ENCODE measurements at regions of chr5 and their contacts with region 1.

Region 1: DNA sequence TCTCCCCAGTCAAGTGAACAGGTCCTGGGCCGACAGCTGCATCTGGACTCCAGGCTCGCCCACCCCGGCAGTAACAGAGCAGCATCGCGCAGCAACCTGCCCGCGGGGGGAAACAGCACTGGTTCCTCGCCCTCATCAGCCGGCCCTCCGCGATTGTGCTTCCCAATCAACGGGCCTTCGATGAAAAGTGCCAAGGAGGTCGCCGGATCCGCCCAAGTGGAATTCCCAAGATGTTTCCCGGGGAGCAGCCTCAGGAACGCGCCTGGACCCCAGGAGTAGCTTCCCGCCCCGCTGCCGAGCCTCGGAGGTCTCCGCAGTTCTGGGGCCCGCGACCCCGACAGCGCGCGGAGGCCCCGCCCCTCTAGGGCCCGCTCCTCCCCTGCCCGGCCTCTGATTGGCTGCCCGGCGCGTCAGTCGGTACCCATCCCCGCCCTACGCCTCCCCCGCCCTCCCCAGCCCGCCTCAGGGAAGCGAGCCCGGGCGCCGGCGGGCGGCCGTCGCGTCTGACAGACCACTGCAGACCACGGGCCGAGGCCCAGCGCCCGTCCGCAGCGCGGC is at the start of gene OTULINL:
- DNase-seq: peak; percentile 81 to 94 (median 88)
- ATAC-seq: peak; percentile 84 to 86
- H3K4me3 Mint-ChIP-seq: peak within 1 kb of the TSS; percentile 86 to 95 (median 89)
- H3K27ac Mint-ChIP-seq: peak within 1 kb of the TSS; percentile 83 to 97 (median 94)
- H3K4me1 Mint-ChIP-seq: peaks cover 20 to 46% (median 42%) of the 10 kb centered on the region in 4 donors
- H3K27me3 Mint-ChIP-seq: peaks cover 0 to 10% (median 0%) of the 10 kb centered on the region in 5 donors
- polyA plus RNA-seq, gene OTULINL: 32.9 to 38.3 (median 36.2) TPM

Region 2: GRCh38 chr5:14415024-14415697 is 166.3 kb before region 1 on chr5:
- POLR2A ChIA-PET with region 1: interaction called, 16 read pairs
- DNase-seq: peak in 3 of 10 donors; percentile 15 to 33 (median 19)
- ATAC-seq: peak in 1 of 2 donors; percentile 15
- H3K4me3 Mint-ChIP-seq: peak overlapping the region; percentile 4 to 86 (median 70)
- H3K27ac Mint-ChIP-seq: peak overlapping the region; percentile 87 to 98 (median 94)
- H3K4me1 Mint-ChIP-seq: peaks cover 21 to 46% (median 39%) of the 10 kb centered on the region in 4 donors
- H3K27me3 Mint-ChIP-seq: no peaks in the 10 kb centered on the region

Region 3: GRCh38 chr5:14560091-14560595 is 21.3 kb before region 1 on chr5:
- POLR2A ChIA-PET with region 1: interaction called, 10 read pairs
- DNase-seq: peak in 5 of 10 donors; percentile 22 to 60 (median 55)
- ATAC-seq: peak; percentile 81 to 86
- H3K4me3 Mint-ChIP-seq: peak overlapping the region; percentile 68 to 89 (median 80)
- H3K27ac Mint-ChIP-seq: peak overlapping the region in 9 of 10 donors; percentile 70 to 92 (median 86)
- H3K4me1 Mint-ChIP-seq: peaks cover 20 to 45% (median 44%) of the 10 kb centered on the region in 4 donors
- H3K27me3 Mint-ChIP-seq: peaks cover 0 to 2% (median 0%) of the 10 kb centered on the region in 5 donors

Region 4: DNA sequence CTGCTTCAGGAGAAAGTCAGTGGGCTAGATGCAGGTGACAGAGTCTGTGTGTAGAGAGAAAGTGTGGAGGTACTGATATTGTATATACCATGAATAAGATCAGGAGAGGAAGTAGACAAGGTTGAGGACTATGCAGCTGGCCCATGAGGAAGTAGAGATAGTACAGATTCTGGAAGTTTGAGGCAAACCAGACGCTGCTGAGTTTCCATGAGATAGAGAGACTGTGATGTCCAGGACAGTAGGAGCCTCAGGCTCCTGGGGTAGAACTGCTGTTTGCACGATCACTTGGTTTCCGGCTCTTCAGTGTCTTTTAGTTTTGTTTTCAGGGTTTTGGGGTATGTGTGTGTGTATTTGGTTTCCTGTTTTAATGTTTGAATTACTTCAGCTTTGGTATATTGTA is 13.8 kb after region 1 on chr5:
- POLR2A ChIA-PET with region 1: interaction called, 91 read pairs
- DNase-seq: peak in 6 of 10 donors; percentile 14 to 74 (median 44)
- ATAC-seq: peak; percentile 83
- H3K4me3 Mint-ChIP-seq: peak overlapping the region; percentile 73 to 89 (median 82)
- H3K27ac Mint-ChIP-seq: peak overlapping the region; percentile 88 to 99 (median 97)
- H3K4me1 Mint-ChIP-seq: peaks cover 59 to 97% (median 90%) of the 10 kb centered on the region in 4 donors
- H3K27me3 Mint-ChIP-seq: no peaks in the 10 kb centered on the region

Region 5: GRCh38 chr5:15044521-15044920 is 463.1 kb after region 1 on chr5:
- POLR2A ChIA-PET with region 1: no interaction called
- DNase-seq: no peak
- ATAC-seq: no peak
- H3K4me3 Mint-ChIP-seq: no peak overlapping the region
- H3K27ac Mint-ChIP-seq: no peak overlapping the region
- H3K4me1 Mint-ChIP-seq: no peaks in the 10 kb centered on the region
- H3K27me3 Mint-ChIP-seq: peaks cover 1 to 17% (median 13%) of the 10 kb centered on the region in 5 donors